ENCODE measurements at regions of chr5 and their contacts with region 1.

Region 1: DNA sequence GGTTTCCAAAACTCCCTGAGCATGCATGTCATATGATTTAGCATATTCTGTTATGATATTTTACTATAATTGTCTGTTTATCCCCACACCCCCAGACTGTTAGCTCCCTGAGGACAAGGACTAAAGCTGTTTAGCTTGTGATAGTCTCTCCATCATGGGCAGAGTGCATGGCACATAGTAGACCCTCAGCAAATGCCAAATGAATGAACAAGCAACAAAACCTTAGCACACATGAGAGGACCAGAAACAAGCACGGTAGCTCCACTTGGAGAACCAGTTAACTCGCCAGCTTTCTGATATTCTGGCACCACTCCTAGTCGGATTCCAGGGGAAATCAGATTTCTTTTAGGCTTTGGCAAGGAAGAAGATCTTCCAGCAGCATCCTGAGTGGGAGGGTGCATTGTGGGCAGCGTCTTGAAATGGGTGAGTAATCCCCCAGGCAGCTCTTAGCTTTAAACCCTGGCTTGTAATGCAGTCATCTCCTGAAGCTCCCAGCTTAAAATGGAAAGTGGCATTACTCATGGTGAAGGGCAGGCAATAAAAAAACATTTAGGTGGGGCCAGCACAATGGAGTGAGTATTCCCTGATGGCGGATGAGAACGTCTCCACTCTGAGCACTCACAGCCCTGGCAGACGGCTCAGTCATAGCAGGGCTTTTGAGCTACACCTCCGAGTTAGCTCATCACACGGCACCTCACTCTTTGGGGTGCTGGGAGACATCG is 41.1 kb downstream of the FGF1 start:
- DNase-seq: peak; percentile 91
- H3K4me3 ChIP-seq: no peak overlapping the region
- H3K27ac ChIP-seq: peak overlapping the region; percentile 82
- H3K4me1 ChIP-seq: peaks cover 12% of the 10 kb centered on the region
- H3K27me3 ChIP-seq: no peaks in the 10 kb centered on the region
- CTCF ChIP-seq: no peak
- POLR2A ChIP-seq: peak; percentile 34

Region 2: GRCh38 chr5:142611154-142611553 is 33.6 kb before region 1 on chr5:
- CTCF ChIA-PET with region 1: interaction called, 19 read pairs
- POLR2A ChIA-PET with region 1: no interaction called
- dilution Hi-C with region 1: no loop called
- intact Hi-C with region 1: no loop called
- DNase-seq: peak; percentile 74
- H3K4me3 ChIP-seq: no peak overlapping the region
- H3K27ac ChIP-seq: no peak overlapping the region
- H3K4me1 ChIP-seq: no peaks in the 10 kb centered on the region
- H3K27me3 ChIP-seq: peaks cover 2 to 27% of the 10 kb centered on the region in 2 experiments
- CTCF ChIP-seq: peak; percentile 87 to 90
- POLR2A ChIP-seq: no peak

Region 3: DNA sequence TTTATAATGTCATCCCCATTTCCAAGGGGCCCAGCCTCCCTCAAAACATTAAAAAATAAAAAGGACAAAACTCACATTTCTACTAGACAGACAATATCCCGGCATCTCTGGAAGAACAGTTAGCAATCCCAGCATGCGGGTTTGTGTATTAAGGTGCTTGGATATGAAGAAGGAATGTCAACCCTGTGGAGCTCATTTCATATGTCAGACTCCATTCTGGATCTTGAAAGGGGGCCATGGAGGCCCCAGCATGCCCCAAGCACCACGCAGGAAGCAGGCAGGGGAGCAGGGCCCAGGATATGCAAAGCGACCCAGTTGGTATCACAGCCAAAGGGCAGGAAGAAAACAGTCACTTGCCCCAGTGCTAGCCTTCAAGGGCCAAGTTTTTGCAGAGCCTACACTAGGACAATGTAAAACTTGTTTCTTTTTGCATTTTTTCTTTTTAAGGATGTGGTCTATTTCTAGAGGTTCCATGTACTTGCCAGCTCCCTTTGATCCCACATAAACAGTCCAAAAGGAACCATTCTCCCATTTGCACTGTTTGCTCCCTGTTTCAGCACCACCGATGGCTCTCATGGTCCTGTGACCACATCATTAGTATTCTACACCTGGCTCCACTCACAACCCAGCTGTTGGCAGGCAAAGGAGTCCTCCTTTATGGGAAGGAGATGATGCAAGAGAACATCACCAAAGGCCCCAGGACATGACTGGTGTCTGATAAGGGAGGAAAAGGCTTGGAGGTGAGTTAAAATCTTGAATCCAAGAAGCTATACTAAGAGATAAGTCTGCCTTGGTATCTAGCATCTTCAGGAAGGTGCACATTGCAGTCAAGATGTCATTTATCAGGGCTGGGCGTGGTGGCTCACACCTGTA is 17.2 kb before region 1 on chr5:
- CTCF ChIA-PET with region 1: interaction called, 4 read pairs
- POLR2A ChIA-PET with region 1: no interaction called
- dilution Hi-C with region 1: no loop called
- intact Hi-C with region 1: loop called (anchors 1 kb)
- DNase-seq: no peak
- H3K4me3 ChIP-seq: no peak overlapping the region
- H3K27ac ChIP-seq: no peak overlapping the region
- H3K4me1 ChIP-seq: peaks cover 9% of the 10 kb centered on the region
- H3K27me3 ChIP-seq: peaks cover 2 to 4% of the 10 kb centered on the region in 2 experiments
- CTCF ChIP-seq: no peak
- POLR2A ChIP-seq: no peak

Region 4: GRCh38 chr5:142690667-142691066 is 45.9 kb after region 1 on chr5:
- CTCF ChIA-PET with region 1: no interaction called
- POLR2A ChIA-PET with region 1: no interaction called
- dilution Hi-C with region 1: no loop called
- intact Hi-C with region 1: no loop called
- DNase-seq: no peak
- H3K4me3 ChIP-seq: no peak overlapping the region
- H3K27ac ChIP-seq: no peak overlapping the region
- H3K4me1 ChIP-seq: no peaks in the 10 kb centered on the region
- H3K27me3 ChIP-seq: peaks cover 17 to 24% of the 10 kb centered on the region in 2 experiments
- CTCF ChIP-seq: no peak
- POLR2A ChIP-seq: no peak